ENCODE measurements at regions of chr2 and their contacts with region 1.

Region 1: GRCh38 chr2:105725388-105725787 is 19.3 kb upstream of the NCK2 start:
- DNase-seq: peak; percentile 75
- H3K4me3 ChIP-seq: peak overlapping the region; percentile 31
- H3K27ac ChIP-seq: peak overlapping the region; percentile 83
- H3K4me1 ChIP-seq: peaks cover 59% of the 10 kb centered on the region
- CTCF ChIP-seq: no peak

Region 2: GRCh38 chr2:105362862-105363591 is 362.4 kb before region 1 on chr2:
- CTCF ChIA-PET with region 1: no interaction called
- POLR2A ChIA-PET with region 1: no interaction called
- intact Hi-C with region 1: no loop called
- DNase-seq: no peak
- H3K4me3 ChIP-seq: no peak overlapping the region
- H3K27ac ChIP-seq: no peak overlapping the region
- H3K4me1 ChIP-seq: no peaks in the 10 kb centered on the region
- CTCF ChIP-seq: no peak

Region 3: DNA sequence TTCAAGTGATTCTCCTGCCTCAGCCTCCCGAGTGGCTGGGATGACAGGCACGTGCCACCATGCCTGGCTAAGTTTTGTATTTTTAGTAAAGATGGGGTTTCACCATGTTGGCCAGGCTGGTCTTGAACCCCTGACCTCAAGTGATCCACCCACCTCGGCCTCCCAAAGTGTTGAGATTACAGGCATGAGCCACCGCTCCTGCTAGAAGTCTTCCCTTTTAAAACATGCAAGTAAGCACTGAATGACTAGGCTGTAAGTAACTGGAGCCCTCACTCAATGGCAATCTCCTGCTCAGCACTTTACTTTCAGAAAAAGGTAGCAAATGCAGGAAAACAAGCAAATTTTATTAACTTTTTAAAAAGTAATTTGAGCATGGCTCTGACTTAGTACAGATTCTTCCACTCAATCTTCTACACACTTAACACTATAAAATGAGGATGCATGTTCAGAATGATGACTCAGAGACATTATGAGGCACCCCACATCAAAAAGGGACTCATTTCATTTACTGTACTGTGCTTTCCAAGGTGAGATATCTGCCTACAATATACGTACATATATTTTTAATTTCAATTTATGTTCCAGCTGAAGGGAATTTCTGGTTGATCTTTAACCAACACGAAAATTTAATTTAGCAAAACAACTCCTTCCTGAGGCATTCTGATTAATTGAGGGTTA is 12.7 kb after region 1 on chr2:
- CTCF ChIA-PET with region 1: interaction called, 6 read pairs
- POLR2A ChIA-PET with region 1: interaction called, 26 read pairs
- intact Hi-C with region 1: loop called (anchors 1 kb)
- DNase-seq: no peak
- H3K4me3 ChIP-seq: no peak overlapping the region
- H3K27ac ChIP-seq: peak overlapping the region; percentile 36
- H3K4me1 ChIP-seq: peaks cover 62% of the 10 kb centered on the region
- CTCF ChIP-seq: no peak

Region 4: GRCh38 chr2:105744091-105744908 is 18.9 kb after region 1 on chr2:
- CTCF ChIA-PET with region 1: interaction called, 6 read pairs
- POLR2A ChIA-PET with region 1: interaction called, 26 read pairs
- intact Hi-C with region 1: loop called (anchors 1 kb)
- DNase-seq: peak; percentile 79
- H3K4me3 ChIP-seq: peak overlapping the region; percentile 68
- H3K27ac ChIP-seq: peak overlapping the region; percentile 37
- H3K4me1 ChIP-seq: peaks cover 59% of the 10 kb centered on the region
- CTCF ChIP-seq: 0 out of 2 replicates have a peak, but pooled peaks have one; percentile 13

Region 5: GRCh38 chr2:105777031-105777482 is 51.7 kb after region 1 on chr2:
- CTCF ChIA-PET with region 1: no interaction called
- POLR2A ChIA-PET with region 1: interaction called, 3 read pairs
- intact Hi-C with region 1: loop called (anchors 1 kb)
- DNase-seq: peak; percentile 33
- H3K4me3 ChIP-seq: no peak overlapping the region
- H3K27ac ChIP-seq: no peak overlapping the region
- H3K4me1 ChIP-seq: peaks cover 29% of the 10 kb centered on the region
- CTCF ChIP-seq: no peak

Region 6: DNA sequence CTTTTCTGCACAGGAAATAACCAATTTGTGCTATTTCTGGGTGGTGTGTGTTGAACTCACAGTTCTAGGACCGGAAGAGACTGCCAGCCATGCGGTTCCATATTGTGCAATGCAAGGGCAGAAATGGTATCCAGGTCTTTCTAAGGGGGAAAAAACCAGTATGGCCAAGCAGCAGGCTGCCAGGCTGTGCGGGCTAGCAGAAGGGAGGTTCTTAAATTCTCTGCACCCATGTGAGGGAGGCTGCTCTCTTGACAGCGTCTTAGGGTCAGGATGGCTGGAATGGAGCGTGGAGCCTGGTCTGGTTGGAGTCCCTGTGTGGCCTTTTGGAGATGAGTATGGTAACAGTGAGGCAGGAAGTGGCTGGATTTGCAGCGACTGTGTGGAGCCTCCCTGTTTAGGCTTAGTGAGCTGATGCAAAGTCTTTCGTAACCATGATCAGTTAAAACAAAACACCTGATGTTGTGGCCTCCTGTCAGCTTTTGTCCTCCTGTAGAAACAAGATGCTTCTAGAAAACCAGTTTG is 72.0 kb after region 1 on chr2:
- CTCF ChIA-PET with region 1: no interaction called
- POLR2A ChIA-PET with region 1: interaction called, 6 read pairs
- intact Hi-C with region 1: loop called (anchors 5 kb)
- DNase-seq: peak; percentile 84
- H3K4me3 ChIP-seq: peak overlapping the region; percentile 56
- H3K27ac ChIP-seq: peak overlapping the region; percentile 89
- H3K4me1 ChIP-seq: peaks cover 76% of the 10 kb centered on the region
- CTCF ChIP-seq: no peak

Region 7: GRCh38 chr2:105834931-105835330 is 109.5 kb after region 1 on chr2:
- CTCF ChIA-PET with region 1: no interaction called
- POLR2A ChIA-PET with region 1: interaction called, 3 read pairs
- intact Hi-C with region 1: loop called (anchors 5 kb)
- DNase-seq: peak; percentile 82
- H3K4me3 ChIP-seq: peak overlapping the region; percentile 44
- H3K27ac ChIP-seq: peak overlapping the region; percentile 94
- H3K4me1 ChIP-seq: peaks cover 28% of the 10 kb centered on the region
- CTCF ChIP-seq: no peak

Region 8: GRCh38 chr2:105866216-105867185 is 141.1 kb after region 1 on chr2:
- CTCF ChIA-PET with region 1: no interaction called
- POLR2A ChIA-PET with region 1: no interaction called
- intact Hi-C with region 1: no loop called
- DNase-seq: no peak
- H3K4me3 ChIP-seq: no peak overlapping the region
- H3K27ac ChIP-seq: no peak overlapping the region
- H3K4me1 ChIP-seq: no peaks in the 10 kb centered on the region
- CTCF ChIP-seq: no peak

Region 9: GRCh38 chr2:106147159-106147558 is 421.8 kb after region 1 on chr2:
- CTCF ChIA-PET with region 1: no interaction called
- POLR2A ChIA-PET with region 1: no interaction called
- intact Hi-C with region 1: no loop called
- DNase-seq: no peak
- H3K4me3 ChIP-seq: no peak overlapping the region
- H3K27ac ChIP-seq: no peak overlapping the region
- H3K4me1 ChIP-seq: no peaks in the 10 kb centered on the region
- CTCF ChIP-seq: no peak

Measured in OCI-LY7 (cell line).